Cardiac septum (tissue), 1 donor: ENCODE measurements at regions of chr15 and their contacts with region 1.

Region 1: DNA sequence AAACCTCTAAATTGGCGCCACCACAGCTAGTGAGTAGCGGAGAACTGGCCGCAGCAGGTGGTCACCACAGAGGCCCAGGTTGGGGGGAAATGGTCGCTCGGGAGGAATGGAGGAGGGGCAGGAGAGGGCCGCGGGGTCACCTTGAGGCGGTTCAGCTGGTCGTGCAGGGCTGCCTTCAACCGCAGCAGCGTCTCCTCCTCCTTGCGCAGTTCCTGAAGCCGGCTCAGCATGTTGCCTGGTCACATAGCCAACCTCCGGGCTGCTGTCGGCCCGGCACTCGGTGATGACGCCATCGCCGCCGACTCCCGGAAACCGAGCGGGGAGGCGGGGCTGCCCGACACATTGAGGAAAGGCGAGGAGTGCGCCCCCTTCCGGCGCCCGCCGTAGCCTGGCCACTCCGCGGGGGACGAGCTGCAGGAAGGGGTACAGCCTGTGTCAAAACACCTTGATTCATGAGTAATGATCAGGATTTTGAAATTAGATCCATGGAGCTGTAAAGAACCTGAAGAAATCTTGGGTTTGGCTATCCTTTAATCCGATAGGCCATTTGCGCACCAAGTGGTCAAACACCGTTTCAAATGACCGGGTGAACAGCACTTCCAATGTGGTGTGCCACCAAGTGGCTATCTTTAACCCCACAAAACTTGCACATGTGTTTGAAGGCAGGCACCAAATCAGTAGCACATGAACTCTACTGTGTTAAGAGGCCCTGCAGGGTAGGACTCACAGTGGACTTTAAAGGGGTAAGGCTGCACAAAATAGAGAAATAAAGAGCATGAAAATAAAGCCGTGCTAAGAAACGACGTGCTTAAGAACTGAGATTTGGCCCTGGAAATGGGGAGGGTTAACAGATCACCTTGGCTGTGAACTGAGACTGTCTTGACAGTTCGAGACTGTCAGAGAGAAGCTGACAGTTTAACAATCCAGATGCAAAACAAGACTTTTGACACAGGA is at the start of gene SNAPC5:
- DNase-seq: peak; percentile 99
- total RNA-seq, gene SNAPC5: 32.0 TPM

Region 2: DNA sequence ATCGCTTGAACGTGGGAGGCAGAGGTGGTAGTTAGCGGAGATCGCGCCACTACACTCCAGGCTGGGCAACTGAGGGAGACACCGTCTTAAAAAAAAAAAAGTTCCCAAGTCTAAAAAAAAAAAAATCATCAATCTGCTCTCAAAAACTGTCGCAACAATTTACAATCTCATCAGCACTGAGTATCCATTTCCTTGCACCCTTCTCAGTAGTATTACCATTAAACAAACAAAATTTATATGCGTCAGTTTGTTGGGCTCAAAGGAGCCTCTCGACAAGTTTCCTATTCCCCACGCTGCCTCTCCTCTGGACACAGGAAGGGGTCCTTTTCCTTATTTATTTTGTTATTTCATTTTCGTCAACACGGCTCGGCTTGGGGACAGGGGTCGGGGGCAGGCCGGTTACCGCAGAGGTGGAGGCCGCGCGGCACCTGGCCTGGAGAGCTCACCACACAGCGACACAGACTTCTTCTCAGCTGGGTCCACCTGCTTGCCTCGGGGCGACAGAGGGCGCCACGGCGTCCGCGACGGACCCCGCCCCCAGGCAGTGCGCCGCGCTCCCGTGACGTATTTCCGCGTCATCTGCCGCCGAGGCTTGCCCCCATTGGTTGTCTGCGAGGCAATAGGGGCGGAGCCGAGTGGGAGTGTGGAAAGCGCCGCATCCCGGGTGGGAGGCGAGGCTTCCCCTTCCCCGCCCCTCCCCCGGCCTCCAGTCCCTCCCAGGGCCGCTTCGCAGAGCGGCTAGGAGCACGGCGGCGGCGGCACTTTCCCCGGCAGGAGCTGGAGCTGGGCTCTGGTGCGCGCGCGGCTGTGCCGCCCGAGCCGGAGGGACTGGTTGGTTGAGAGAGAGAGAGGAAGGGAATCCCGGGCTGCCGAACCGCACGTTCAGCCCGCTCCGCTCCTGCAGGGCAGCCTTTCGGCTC is 111.3 kb before region 1 on chr15 and contains the start of gene MAP2K1:
- intact Hi-C with region 1: loop called (anchors 1 kb)
- DNase-seq: peak; percentile 100
- total RNA-seq, gene MAP2K1: 38.7 TPM

Region 3: DNA sequence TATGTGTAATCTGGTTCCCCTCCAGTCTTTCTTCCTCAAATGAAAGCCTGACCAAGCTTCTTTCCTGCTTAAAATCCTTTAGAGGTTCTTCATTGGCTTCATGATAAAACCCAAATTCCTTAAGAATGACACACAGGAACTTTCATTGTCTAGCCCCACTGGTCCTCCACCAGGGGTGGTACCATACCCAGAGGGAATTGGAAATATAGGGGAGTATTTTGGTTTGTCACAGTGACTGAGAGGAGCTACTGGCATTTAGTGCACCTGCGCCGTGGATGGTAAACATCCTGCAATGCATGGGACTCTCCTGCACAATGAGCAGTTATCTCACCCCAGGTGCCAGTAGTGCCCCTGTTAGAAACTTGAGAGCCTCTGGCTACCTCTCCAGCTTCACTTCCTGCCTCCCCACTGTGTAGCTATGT is 18.1 kb after region 1 on chr15:
- intact Hi-C with region 1: no loop called
- DNase-seq: no peak

Region 4: GRCh38 chr15:66657185-66658020 is 159.6 kb after region 1 on chr15:
- intact Hi-C with region 1: no loop called
- DNase-seq: no peak